Head of caudate nucleus (tissue), 42 donors: ENCODE measurements at regions of chr7 and their contacts with region 1.

Region 1: DNA sequence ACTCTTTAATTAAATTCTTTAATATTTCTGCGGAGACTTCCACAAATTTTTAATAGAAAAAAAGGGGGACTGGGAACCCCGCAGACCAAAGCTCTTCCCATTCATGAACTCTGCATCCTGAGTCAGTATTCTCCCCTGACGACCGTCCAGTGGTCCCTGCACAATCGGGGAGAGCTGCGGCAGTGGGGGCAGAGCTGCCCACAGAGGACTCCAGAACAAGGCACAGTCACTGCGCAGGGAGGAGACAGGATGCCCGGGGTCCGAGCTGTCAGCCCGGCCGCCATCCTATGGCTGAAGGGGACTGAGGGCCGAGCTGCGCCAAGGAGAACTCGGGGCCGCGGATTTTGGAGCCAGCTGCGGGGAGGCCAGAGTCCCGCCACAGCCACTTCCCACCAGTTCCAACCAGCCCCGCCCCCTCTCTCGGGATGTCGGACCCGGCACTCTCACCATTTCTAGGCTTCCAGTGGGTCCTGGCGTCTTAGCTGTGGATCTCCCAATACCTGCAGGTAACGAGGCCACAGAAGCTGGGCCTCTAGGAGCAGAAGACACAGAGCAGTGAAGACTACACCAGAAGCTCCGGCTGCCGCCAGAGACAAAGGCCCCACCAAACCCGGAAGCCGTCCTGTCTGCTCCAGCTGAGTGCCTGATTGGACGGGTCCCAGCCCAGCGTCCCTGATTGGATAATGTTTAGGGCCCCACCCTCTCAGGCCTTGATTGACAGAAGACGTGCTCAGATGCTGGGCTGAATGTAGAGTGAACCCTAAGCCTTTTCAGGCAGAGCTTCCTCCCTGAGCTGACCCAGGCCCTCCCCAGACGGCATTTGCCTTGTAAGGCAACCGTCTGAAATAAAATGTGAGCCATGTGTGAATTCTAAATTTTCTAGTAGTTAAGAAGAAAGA is at the start of gene ERV3-1:
- DNase-seq: peak; percentile 95 to 99 (median 98)

Region 2: DNA sequence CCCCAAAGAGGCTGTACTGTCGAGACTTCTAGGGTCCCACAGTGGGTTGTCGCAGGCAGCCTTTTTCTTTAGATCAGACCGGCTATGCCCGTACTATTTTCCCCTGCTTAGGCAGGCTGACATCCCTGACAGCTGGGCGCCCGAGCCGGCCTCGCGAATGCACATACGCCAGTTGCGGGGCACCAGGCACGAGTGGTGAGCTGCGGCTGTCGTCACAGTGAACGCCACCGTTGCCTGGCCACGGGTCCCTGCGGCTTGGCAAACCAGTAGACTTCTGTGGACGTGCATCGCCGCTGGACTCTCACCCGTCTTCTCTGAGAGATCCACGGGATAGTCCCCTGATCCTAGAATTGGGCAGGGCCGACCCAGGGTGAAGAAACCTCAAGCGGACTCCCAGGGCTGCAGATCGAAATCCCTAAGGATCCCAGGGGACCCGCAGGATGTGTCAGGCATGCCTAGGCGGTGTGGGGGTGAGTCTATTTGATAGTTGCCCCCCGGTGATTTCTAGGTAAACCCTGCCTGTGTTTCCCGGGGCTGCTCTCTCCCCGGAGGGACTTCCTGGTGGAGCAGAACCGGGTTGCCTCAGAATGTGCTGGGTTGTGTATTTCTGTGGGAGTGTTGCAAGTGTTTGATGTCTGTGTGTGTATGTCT is 136.3 kb before region 1 on chr7:
- intact Hi-C with region 1: no loop called
- DNase-seq: peak in 10 of 42 donors; percentile 0 to 22 (median 7)

Region 3: DNA sequence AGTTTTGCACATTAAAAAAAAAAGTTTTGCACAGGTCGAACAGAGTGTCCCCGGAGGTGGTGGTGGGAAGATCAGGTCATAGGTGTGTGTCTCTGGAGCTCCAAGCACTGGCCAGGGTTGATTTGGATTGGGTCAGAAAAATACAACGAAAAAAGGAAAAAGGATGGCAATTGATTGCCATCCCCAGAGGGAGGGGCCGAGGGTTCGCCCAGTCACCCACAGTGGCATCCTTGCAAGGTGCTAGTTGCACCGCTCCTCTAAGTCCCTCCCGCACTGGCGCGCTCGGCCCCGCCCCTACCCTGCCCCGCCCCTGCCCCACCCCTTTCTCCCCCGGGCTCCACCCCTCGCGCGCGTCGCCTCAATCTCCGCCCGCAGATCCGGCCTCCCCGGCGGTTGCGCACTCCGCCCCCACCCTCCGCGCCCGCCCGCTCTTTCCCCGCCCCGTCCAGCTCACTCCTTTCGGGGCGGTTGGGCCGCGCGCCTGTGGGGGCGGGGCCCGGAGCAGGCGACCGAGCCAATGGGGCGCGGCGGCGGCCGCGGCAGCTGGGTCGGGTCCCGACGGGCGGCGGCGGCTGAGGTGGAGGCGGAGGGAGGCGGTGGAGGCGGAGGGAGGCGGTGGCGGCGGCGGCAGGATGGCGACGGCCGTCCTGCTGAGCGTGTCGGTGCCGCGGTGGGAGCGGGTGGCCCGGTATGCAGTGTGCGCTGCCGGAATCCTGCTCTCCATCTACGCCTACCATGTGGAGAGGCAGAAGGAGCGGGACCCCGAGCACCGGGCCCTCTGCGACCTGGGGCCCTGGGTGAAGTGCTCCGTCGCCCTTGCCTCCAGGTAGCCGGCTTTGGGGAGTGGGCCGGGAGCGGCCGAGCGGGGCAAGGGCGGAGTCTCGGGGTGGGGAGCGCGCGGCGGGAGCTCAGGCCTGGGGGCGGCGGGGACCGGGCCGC is 31.7 kb after region 1 on chr7:
- intact Hi-C with region 1: loop called (anchors 2 kb)
- DNase-seq: peak; percentile 70 to 97 (median 93)